Activated T-helper 1 cell treated with anti-CD3 and anti-CD28 coated beads, Interleukin-12 subunit alpha, Interleukin-12 subunit beta, Interleukin-2, Interleukin-4 antibody, amounts not matched to agents 30 ng/mL and 10 ng/mL and 1 ng/mL, durations not matched to agents 14 hours and 24 hours and 36 hours (primary cell): ENCODE measurements at regions of chr2 and their contacts with region 1.

Region 1: GRCh38 chr2:224585205-224586088 is at the start of gene CUL3:
- DNase-seq: peak; percentile 99
- H3K4me3 Mint-ChIP-seq: peak within 1 kb of the TSS; percentile 97
- H3K27ac Mint-ChIP-seq: peak within 1 kb of the TSS; percentile 96
- H3K4me1 Mint-ChIP-seq: peaks cover 44% of the 10 kb centered on the region
- H3K27me3 Mint-ChIP-seq: no peaks in the 10 kb centered on the region
- total RNA-seq, gene CUL3: 97.1 and 103 TPM in 2 replicates

Region 2: GRCh38 chr2:222655787-222656525 is 1929.5 kb before region 1 on chr2 and contains the start of gene FARSB:
- intact Hi-C with region 1: loop called (anchors 5 kb)
- DNase-seq: peak; percentile 90
- H3K4me3 Mint-ChIP-seq: peak within 1 kb of the TSS; percentile 95
- H3K27ac Mint-ChIP-seq: peak within 1 kb of the TSS; percentile 87
- H3K4me1 Mint-ChIP-seq: peaks cover 36% of the 10 kb centered on the region
- H3K27me3 Mint-ChIP-seq: no peaks in the 10 kb centered on the region
- total RNA-seq, gene FARSB: 48.9 and 53.4 TPM in 2 replicates

Region 3: GRCh38 chr2:224039124-224039940 is 546.1 kb before region 1 on chr2 and contains the start of gene SERPINE2:
- intact Hi-C with region 1: loop called (anchors 1 kb)
- DNase-seq: peak; percentile 46
- H3K4me3 Mint-ChIP-seq: peak within 1 kb of the TSS; percentile 97
- H3K27ac Mint-ChIP-seq: peak within 1 kb of the TSS; percentile 82
- H3K4me1 Mint-ChIP-seq: peaks cover 25% of the 10 kb centered on the region
- H3K27me3 Mint-ChIP-seq: peaks cover 38% of the 10 kb centered on the region
- total RNA-seq, gene SERPINE2: 28.8 and 29.7 TPM in 2 replicates

Region 4: GRCh38 chr2:224561234-224562005 is 24.0 kb before region 1 on chr2:
- intact Hi-C with region 1: loop called (anchors 1 kb)
- DNase-seq: no peak
- H3K4me3 Mint-ChIP-seq: no peak overlapping the region
- H3K27ac Mint-ChIP-seq: no peak overlapping the region
- H3K4me1 Mint-ChIP-seq: peaks cover 18% of the 10 kb centered on the region
- H3K27me3 Mint-ChIP-seq: no peaks in the 10 kb centered on the region

Region 5: DNA sequence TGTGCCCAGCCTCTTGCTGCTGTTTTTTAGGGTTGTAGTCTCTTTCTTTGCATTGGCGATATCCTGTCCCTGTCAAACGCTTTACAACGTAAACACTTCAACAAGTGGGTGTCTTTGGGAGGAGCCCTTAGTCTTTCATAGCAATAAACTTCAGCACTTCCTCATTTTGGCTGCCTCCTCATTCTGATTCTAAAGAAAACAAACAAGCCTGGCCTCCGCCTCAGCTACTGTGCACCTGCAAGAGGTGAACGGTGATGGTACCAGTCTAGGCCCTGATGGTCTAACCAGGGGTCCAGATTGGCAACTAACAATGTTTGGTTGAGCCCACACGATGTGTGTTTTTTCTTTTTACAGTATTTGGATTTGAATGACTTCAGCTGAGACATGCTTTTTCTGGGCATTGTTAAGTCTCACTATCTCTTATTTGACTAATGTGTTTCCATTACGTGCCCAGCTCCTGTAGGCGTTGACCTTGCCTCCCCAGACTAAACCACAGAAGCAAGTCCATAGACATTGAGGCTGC is 52.9 kb after region 1 on chr2:
- intact Hi-C with region 1: loop called (anchors 1 kb)
- DNase-seq: no peak
- H3K4me3 Mint-ChIP-seq: peak overlapping the region; percentile 51
- H3K27ac Mint-ChIP-seq: peak overlapping the region; percentile 87
- H3K4me1 Mint-ChIP-seq: peaks cover 11% of the 10 kb centered on the region
- H3K27me3 Mint-ChIP-seq: peaks cover 4% of the 10 kb centered on the region

Region 6: DNA sequence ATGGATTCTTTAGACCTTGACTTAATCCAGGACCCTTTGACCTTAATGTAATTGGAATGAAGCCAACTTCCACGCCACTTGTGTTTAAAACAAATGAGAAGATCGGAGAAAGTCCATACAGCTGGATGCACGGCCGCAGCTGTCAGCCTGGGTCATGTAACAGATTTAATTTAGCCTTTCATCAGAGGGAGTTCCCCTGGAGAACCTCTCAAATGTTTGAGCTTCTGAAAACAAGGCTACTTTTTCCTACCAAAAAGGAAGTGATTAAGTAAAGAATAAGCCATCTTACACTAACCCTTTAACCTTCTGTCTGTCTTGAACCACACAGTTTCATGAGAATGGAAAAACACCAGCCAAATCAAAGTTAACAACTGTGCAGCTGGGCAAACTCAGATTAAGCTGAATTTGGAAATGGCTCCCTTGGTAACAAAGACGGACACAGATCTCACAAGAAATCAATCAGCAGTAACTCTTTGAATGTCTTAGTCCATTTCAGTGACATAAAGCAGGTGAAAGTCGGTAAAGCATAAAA is 353.3 kb after region 1 on chr2:
- intact Hi-C with region 1: loop called (anchors 5 kb)
- DNase-seq: no peak
- H3K4me3 Mint-ChIP-seq: peak overlapping the region; percentile 81
- H3K27ac Mint-ChIP-seq: peak overlapping the region; percentile 91
- H3K4me1 Mint-ChIP-seq: peaks cover 81% of the 10 kb centered on the region
- H3K27me3 Mint-ChIP-seq: no peaks in the 10 kb centered on the region